HAP-1 (cell line): ENCODE measurements at regions of chr19 and their contacts with region 1.

Region 1: GRCh38 chr19:42132851-42133528 is 744 bp upstream of the POU2F2 start:
- DNase-seq: peak; percentile 27 to 78
- H3K4me3 ChIP-seq: no peak overlapping the region
- H3K4me1 ChIP-seq: peaks cover 4% of the 10 kb centered on the region; the same call in 1 of the 2 replicates
- H3K27me3 ChIP-seq: peaks cover 17% of the 10 kb centered on the region

Region 2: GRCh38 chr19:42229855-42230351 is 96.9 kb after region 1 on chr19:
- in situ Hi-C with region 1: no loop called
- DNase-seq: no peak
- H3K4me3 ChIP-seq: no peak overlapping the region
- H3K4me1 ChIP-seq: no peaks in the 10 kb centered on the region
- H3K27me3 ChIP-seq: no peaks in the 10 kb centered on the region

Region 3: GRCh38 chr19:42301656-42302203 is 168.7 kb after region 1 on chr19 and contains the start of gene PRR19:
- in situ Hi-C with region 1: loop called (anchors 10 kb)
- DNase-seq: no peak
- H3K4me3 ChIP-seq: peak within 1 kb of the TSS; percentile 72
- H3K4me1 ChIP-seq: peaks cover 10% of the 10 kb centered on the region
- H3K27me3 ChIP-seq: no peaks in the 10 kb centered on the region